ENCODE measurements at regions of chr2 and their contacts with region 1.

Region 1: DNA sequence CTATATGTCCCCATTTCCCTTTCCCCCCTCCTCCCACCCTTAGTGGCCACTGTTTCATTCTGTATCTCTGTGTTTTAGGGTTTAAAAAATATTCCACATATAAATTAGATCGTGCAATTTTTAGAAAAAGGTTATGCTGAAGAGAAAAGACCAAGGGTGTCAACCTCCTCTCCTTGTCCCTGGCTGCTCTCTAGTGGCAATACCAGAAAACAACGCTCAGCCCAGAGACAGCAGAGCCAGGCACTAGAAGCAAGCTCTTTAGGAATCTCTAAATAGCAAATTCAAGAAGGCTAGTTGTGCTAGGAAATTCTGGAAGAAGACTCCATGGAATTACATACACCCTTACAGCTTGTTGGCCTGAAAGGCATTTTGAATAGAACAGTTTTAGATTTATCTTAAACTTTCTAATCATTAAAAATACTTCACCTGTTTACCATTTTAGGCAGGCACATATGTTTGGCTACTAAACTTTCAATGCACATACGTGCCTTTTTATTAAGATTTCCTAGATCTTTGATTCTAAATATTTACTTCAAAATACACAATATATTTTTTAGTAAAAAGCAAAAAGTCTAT is 35.1 kb upstream of the RASGRP3 start:
- DNase-seq: peak in 1 of 2 donors; percentile 23
- ATAC-seq: peak; percentile 70 to 88 (median 78)
- H3K4me3 ChIP-seq: no peak overlapping the region
- H3K27ac ChIP-seq: peak overlapping the region; percentile 76
- H3K4me1 ChIP-seq: peaks cover 34% of the 10 kb centered on the region
- H3K27me3 ChIP-seq: no peaks in the 10 kb centered on the region
- CTCF ChIP-seq: peak; percentile 72

Region 2: DNA sequence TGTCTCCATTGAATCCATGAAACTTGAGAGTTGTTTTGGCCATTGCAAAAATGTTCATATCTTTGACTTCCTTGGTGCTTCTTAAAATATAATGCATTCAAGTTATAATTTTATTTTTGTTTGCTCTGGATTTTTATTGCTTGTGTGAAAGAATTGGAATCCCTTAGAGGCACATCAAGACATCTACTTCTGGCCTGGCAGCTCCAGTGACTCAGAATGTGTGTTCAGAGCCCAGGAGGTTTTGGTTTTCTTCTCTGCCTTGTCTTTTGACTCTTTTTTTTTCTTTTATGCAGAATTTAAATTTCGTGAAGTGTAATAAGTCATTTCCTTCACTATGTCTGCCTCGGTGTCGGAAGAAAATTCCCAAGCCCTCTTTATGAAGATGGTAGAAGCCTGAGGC is 314.4 kb before region 1 on chr2:
- intact Hi-C with region 1: loop called in 1 of 2 experiments (anchors 5 kb)
- DNase-seq: no peak
- ATAC-seq: no peak
- H3K4me3 ChIP-seq: no peak overlapping the region
- H3K27ac ChIP-seq: no peak overlapping the region
- H3K4me1 ChIP-seq: no peaks in the 10 kb centered on the region
- H3K27me3 ChIP-seq: no peaks in the 10 kb centered on the region
- CTCF ChIP-seq: no peak

Region 3: GRCh38 chr2:33317369-33318007 is 123.8 kb before region 1 on chr2:
- intact Hi-C with region 1: no loop called
- DNase-seq: no peak
- ATAC-seq: no peak
- H3K4me3 ChIP-seq: no peak overlapping the region
- H3K27ac ChIP-seq: no peak overlapping the region
- H3K4me1 ChIP-seq: peaks cover 16% of the 10 kb centered on the region
- H3K27me3 ChIP-seq: no peaks in the 10 kb centered on the region
- CTCF ChIP-seq: no peak

Measured in psoas muscle (tissue), 8 donors.